A549 (cell line): ENCODE measurements at regions of chr13 and their contacts with region 1.

Region 1: DNA sequence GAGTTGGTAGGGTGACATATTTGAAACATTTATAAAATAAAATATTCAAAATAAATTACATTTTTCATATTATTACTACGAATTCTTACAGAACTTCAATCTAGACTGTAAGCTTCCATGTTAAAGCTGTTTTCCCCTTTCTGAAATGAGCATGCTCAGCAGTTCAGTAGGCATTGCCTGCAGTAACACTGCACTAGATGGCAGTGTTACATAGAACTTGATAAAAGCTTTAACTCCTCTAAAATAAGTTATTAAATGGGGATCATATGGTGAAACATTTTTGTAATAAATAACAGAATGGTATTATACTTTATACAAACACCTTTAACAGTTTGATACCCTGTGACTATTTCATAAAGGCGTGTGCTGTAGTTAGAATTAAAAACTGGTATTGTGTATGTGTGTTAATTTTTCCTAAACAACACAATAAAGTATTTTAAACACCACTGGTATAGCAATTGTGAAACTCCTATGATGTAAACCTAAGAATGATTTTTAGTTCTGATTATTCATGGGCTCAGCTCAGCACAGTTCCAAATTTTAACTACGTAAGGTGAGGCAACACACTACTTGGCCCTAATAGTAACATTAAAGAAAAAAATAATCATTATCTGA is 11.6 kb upstream of the GPR18 start:
- DNase-seq: peak in 1 of 2 experiments; percentile 45
- ATAC-seq: peak in 1 of 2 experiments; percentile 83; a peak in 4 of 6 replicates
- H3K4me3 ChIP-seq: no peak overlapping the region
- H3K27ac ChIP-seq: no peak overlapping the region
- H3K4me1 ChIP-seq: no peaks in the 10 kb centered on the region
- CTCF ChIP-seq: peak; percentile 66
- EP300 ChIP-seq: no peak
- POLR2A ChIP-seq: no peak
- RAD21 ChIP-seq: peak; percentile 54 to 58; a peak in 4 of 5 replicates

Region 2: DNA sequence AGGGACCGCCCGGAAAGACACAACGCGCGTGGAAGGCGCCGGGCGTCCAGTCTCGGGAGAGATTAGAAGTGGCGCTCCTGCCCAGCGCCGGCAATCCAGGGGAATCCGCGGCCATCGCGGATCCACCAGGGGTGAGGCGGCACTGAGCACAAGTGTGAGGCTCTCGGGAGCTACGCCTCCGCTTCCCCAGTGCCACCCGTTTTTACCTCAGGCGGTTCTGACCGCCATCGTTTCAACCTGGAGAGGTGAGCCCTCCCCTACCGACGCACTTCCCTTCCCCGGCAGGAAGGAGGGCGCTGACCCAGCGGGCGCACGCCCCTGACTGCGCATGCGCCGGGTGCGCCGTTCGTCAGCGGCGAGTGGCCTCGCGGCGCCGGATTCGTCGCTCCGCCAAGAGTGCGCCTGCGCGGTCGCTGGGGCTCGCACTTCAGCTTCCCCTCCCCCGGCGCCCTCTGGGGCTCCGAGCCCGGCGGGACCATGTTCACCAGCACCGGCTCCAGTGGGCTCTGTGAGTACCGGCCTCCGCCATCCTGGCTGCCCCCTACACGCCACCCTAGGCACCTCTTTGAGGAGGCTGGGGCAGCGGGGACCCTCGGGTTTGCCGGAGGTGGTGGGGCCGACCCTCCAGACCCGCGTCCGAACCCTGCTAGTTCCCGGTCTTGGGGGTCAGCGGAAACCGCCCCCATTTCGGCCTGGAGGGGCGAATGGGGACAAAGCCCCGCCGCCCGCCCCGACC is 69.1 kb before region 1 on chr13 and contains the start of gene UBAC2:
- CTCF ChIA-PET with region 1: interaction called, 12 read pairs
- POLR2A ChIA-PET with region 1: interaction called, 5 read pairs
- DNase-seq: peak; percentile 80 to 92
- ATAC-seq: peak; percentile 91 to 93
- H3K4me3 ChIP-seq: peak within 1 kb of the TSS; percentile 90
- H3K27ac ChIP-seq: peak within 1 kb of the TSS; percentile 94 to 96
- H3K4me1 ChIP-seq: peaks cover 7% of the 10 kb centered on the region
- CTCF ChIP-seq: no peak
- EP300 ChIP-seq: no peak
- POLR2A ChIP-seq: peak; percentile 86
- RAD21 ChIP-seq: no peak
- polyA plus RNA-seq, gene UBAC2: 92.8 and 103 TPM in 2 replicates

Region 3: DNA sequence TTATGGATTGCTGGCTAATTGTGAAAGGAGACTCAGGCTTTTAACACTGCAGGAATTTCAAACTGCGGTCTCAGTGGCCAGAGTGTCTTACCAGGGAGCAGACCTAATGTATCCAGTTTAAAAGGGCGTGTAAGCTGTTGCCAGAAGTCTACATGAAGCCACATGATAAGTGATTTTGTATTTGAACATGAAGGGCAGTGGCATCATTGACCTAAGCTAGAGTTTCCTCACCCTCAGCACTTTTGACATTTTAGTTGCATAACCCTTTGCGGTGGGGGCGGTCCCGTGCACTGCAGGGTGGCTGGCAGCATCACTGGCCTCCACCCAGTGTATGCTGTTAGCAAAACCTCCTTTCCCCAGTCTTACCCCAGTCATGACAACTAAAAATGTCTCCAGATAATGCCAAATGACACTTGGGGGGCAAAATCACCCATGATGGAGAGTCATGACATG is 12.1 kb after region 1 on chr13:
- CTCF ChIA-PET with region 1: interaction called, 20 read pairs
- POLR2A ChIA-PET with region 1: no interaction called
- DNase-seq: no peak
- ATAC-seq: no peak
- H3K4me3 ChIP-seq: no peak overlapping the region
- H3K27ac ChIP-seq: no peak overlapping the region
- H3K4me1 ChIP-seq: no peaks in the 10 kb centered on the region
- CTCF ChIP-seq: no peak
- EP300 ChIP-seq: no peak
- POLR2A ChIP-seq: no peak
- RAD21 ChIP-seq: no peak